Left lung (tissue), 14 donors: ENCODE measurements at regions of chr17 and their contacts with region 1.

Region 1: GRCh38 chr17:32659419-32659842 is 172.6 kb downstream of the CDK5R1 start:
- DNase-seq: peak in 2 of 4 donors; percentile 35 to 65
- ATAC-seq: peak; percentile 98
- H3K4me3 ChIP-seq: no peak overlapping the region
- H3K27ac ChIP-seq: no peak overlapping the region
- H3K4me1 ChIP-seq: no peaks in the 10 kb centered on the region
- H3K27me3 ChIP-seq: no peaks in the 10 kb centered on the region
- CTCF ChIP-seq: peak; percentile 80 to 93

Region 2: DNA sequence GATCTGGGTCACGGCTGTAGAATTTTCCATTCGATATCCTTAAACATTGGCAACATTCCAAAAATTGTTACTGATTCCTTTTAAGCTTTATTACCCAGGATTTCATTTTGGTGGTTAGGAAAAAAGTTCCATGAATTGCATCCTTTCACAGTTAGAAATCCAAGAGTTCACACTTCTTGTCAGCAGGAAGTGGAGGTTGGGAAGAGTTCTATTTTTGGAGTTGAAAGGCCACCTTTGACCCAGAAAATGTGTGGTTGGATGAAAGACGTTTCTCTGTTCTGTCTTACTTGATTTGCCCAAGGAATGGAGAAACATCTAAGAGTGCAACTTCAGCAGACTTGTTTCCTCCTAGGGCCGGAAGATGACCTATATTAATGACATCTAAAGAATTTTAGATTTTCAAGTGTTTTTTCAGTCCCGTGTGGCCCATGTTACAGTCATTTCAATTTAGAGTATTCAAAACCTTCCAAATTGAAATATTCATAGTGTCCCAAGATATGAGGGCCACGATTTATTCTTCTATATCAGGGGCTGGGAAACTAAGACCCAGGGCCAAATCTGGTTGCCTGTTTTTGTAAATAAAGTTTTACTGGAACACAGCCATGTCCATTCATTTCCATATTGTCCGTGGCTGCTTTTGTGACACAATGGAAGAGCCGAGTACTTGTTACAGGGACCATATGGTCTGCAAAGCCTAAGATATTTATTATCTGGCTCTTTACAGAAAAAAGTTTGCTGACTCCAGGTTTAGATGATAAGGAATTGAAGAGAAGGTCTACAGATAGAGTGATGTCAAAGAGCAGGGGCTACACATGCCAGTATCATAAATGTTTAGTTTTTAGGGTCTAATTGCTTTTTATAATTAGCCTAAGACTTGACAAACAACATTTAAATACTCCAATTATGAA is 122.4 kb before region 1 on chr17:
- intact Hi-C with region 1: no loop called
- DNase-seq: no peak
- ATAC-seq: no peak
- H3K4me3 ChIP-seq: no peak overlapping the region
- H3K27ac ChIP-seq: no peak overlapping the region
- H3K4me1 ChIP-seq: no peaks in the 10 kb centered on the region
- H3K27me3 ChIP-seq: no peaks in the 10 kb centered on the region
- CTCF ChIP-seq: no peak

Region 3: GRCh38 chr17:32584792-32585191 is 74.6 kb before region 1 on chr17:
- intact Hi-C with region 1: no loop called
- DNase-seq: no peak
- ATAC-seq: no peak
- H3K4me3 ChIP-seq: no peak overlapping the region
- H3K27ac ChIP-seq: no peak overlapping the region
- H3K4me1 ChIP-seq: no peaks in the 10 kb centered on the region
- H3K27me3 ChIP-seq: no peaks in the 10 kb centered on the region
- CTCF ChIP-seq: no peak

Region 4: GRCh38 chr17:32742681-32743538 is 83.5 kb after region 1 on chr17:
- intact Hi-C with region 1: loop called in 1 of 2 experiments (anchors 10 kb)
- DNase-seq: no peak
- ATAC-seq: no peak
- H3K4me3 ChIP-seq: no peak overlapping the region
- H3K27ac ChIP-seq: no peak overlapping the region
- H3K4me1 ChIP-seq: peaks cover 0 to 6% of the 10 kb centered on the region in 2 donors
- H3K27me3 ChIP-seq: no peaks in the 10 kb centered on the region
- CTCF ChIP-seq: no peak

Region 5: GRCh38 chr17:32859857-32860525 is 200.6 kb after region 1 on chr17:
- intact Hi-C with region 1: no loop called
- DNase-seq: no peak
- ATAC-seq: no peak
- H3K4me3 ChIP-seq: no peak overlapping the region
- H3K27ac ChIP-seq: no peak overlapping the region
- H3K4me1 ChIP-seq: no peaks in the 10 kb centered on the region
- H3K27me3 ChIP-seq: no peaks in the 10 kb centered on the region
- CTCF ChIP-seq: no peak